Sigmoid colon (tissue), 7 donors: ENCODE measurements at regions of chr4 and their contacts with region 1.

Region 1: DNA sequence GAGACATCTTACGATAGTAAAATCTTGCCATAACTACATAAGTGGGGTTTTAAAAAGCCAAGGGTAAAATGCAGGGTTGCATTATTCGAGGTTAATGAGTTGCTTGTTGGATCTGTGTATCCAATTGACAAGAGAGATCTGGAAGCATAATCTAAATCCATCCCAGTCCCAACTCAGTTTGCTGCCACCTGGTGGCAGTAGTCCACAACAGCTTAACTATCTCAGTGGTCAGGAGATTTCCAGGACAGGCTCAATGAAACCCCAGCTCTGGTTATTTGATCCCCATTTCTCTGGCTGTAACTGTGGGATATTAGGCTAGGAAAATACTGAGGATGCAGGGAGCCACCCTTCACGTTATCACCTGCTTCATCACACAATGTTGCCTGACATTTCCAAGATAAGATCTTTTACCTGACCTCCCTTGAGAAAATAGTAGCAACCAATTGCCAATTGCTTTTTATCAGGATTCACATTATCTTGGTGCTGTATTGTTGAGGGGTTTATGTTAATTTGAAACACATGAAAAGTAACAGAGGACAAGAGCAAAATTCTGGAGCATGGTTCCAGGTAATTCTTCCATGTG is 88.2 kb upstream of the TNIP3 start:
- DNase-seq: peak; percentile 68
- H3K4me3 ChIP-seq: no peak overlapping the region
- H3K27ac ChIP-seq: no peak overlapping the region
- H3K4me1 ChIP-seq: no peaks in the 10 kb centered on the region
- H3K27me3 ChIP-seq: no peaks in the 10 kb centered on the region
- CTCF ChIP-seq: peak; percentile 24 to 76 (median 56)
- EP300 ChIP-seq: no peak
- POLR2A ChIP-seq: no peak

Region 2: GRCh38 chr4:120071192-120071795 is 1181.0 kb before region 1 on chr4:
- intact Hi-C with region 1: loop called (anchors 5 kb)
- DNase-seq: no peak
- H3K4me3 ChIP-seq: no peak overlapping the region
- H3K27ac ChIP-seq: no peak overlapping the region
- H3K4me1 ChIP-seq: peaks cover 0 to 25% (median 13%) of the 10 kb centered on the region in 4 donors
- H3K27me3 ChIP-seq: no peaks in the 10 kb centered on the region
- CTCF ChIP-seq: peak in 3 of 4 experiments; percentile 22 to 70 (median 62)
- EP300 ChIP-seq: no peak
- POLR2A ChIP-seq: no peak

Region 3: DNA sequence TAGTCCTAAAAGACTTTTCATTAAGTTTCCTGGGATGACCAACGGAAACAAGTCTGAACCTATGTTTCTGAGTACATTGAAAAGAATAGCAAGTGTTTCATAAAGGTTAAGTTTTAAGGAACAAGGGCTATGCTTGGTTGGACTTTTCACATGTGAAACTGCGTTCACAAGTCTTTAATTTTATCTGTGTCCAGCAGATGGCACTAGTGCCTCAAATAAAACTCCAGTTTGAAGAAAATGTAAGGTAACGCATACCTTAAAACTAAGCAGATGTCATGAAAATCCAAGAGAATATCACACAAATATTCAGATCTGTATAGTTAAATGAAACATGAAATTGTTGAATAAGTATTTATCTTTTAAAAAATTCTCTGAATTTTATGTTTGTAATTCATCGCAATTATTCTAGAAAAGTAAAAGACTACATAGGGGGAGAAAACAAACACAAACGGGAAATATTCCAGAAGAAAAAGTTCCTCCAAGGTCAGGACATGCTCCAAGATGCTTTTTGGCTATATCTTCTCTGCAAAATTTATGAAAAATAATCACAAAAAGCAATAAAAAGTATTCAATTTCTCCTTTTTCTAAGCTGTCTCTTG is 1096.1 kb before region 1 on chr4:
- intact Hi-C with region 1: loop called (anchors 5 kb)
- DNase-seq: no peak
- H3K4me3 ChIP-seq: no peak overlapping the region
- H3K27ac ChIP-seq: no peak overlapping the region
- H3K4me1 ChIP-seq: no peaks in the 10 kb centered on the region
- H3K27me3 ChIP-seq: no peaks in the 10 kb centered on the region
- CTCF ChIP-seq: peak; percentile 42 to 64 (median 58)
- EP300 ChIP-seq: no peak
- POLR2A ChIP-seq: no peak

Region 4: DNA sequence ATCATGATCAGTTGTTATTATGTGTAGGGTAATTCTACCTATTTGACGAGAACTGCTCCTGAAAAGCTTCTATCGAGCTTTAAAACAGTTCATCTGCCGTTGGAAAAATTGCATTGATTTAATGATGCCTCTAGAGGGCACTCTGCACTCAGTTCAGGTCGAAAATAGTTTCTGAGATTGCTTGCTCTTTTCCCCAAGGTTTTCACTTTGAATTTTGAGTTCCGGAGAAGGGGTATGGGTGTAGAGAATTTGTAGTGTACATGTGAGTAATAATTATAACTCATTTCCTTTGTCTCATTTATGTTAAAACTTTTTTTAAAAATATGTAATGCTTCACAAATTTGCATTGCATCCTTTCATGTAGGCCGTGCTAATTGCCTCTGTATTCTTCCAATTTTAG is 59.8 kb before region 1 on chr4:
- intact Hi-C with region 1: loop called (anchors 1 kb)
- DNase-seq: no peak
- H3K4me3 ChIP-seq: no peak overlapping the region
- H3K27ac ChIP-seq: no peak overlapping the region
- H3K4me1 ChIP-seq: no peaks in the 10 kb centered on the region
- H3K27me3 ChIP-seq: no peaks in the 10 kb centered on the region
- CTCF ChIP-seq: peak in 3 of 4 experiments; percentile 36 to 60 (median 52)
- EP300 ChIP-seq: no peak
- POLR2A ChIP-seq: no peak